Posterior vena cava (tissue), 2 donors: ENCODE measurements at regions of chr9 and their contacts with region 1.

Region 1: GRCh38 chr9:26744191-26744965 is 148.2 kb downstream of the CAAP1 start:
- DNase-seq: no peak

Region 2: GRCh38 chr9:26975693-26976059 is 231.3 kb after region 1 on chr9:
- intact Hi-C with region 1: loop called (anchors 5 to 10 kb)
- DNase-seq: no peak